Esophagus muscularis mucosa (tissue), 4 donors: ENCODE measurements at regions of chr3 and their contacts with region 1.

Region 1: GRCh38 chr3:94069194-94069813 is 6.4 kb downstream of the NSUN3 start:
- DNase-seq: no peak
- H3K4me3 ChIP-seq: no peak overlapping the region
- H3K27ac ChIP-seq: no peak overlapping the region
- H3K4me1 ChIP-seq: peaks cover 5 to 23% (median 19%) of the 10 kb centered on the region in 4 donors
- H3K27me3 ChIP-seq: no peaks in the 10 kb centered on the region
- CTCF ChIP-seq: peak; percentile 52 to 68 (median 57)
- EP300 ChIP-seq: no peak
- POLR2A ChIP-seq: no peak

Region 2: GRCh38 chr3:94009608-94010007 is 59.7 kb before region 1 on chr3:
- intact Hi-C with region 1: loop called (anchors 5 kb)
- DNase-seq: no peak
- H3K4me3 ChIP-seq: no peak overlapping the region
- H3K27ac ChIP-seq: no peak overlapping the region
- H3K4me1 ChIP-seq: peaks cover 0 to 11% (median 10%) of the 10 kb centered on the region in 4 donors
- H3K27me3 ChIP-seq: no peaks in the 10 kb centered on the region
- CTCF ChIP-seq: no peak
- EP300 ChIP-seq: no peak
- POLR2A ChIP-seq: no peak

Region 3: DNA sequence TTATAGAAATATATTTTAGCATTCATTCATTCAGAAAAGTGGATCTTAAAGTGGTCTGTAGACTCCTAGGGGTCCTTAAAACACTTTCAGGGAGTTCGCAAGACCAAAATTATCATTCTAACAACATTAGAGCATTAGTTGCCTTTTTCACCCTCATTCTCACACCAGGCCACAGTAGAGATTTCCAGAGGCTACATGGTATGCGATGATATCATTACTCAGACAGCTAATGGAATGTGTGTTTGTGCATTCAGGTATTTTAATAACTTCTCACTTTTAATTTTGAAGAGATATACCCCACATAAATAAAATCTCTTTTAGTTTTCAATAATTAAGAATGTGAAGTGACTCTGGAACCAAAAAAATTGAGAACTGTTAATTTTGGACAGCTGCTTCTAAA is 200.5 kb after region 1 on chr3:
- intact Hi-C with region 1: no loop called
- DNase-seq: no peak
- H3K4me3 ChIP-seq: no peak overlapping the region
- H3K27ac ChIP-seq: peak overlapping the region in 1 of 4 donors; percentile 5
- H3K4me1 ChIP-seq: peaks cover 0 to 10% (median 4%) of the 10 kb centered on the region in 4 donors
- H3K27me3 ChIP-seq: no peaks in the 10 kb centered on the region
- CTCF ChIP-seq: no peak
- EP300 ChIP-seq: no peak
- POLR2A ChIP-seq: no peak